ENCODE measurements at regions of chr3 and their contacts with region 1.

Region 1: DNA sequence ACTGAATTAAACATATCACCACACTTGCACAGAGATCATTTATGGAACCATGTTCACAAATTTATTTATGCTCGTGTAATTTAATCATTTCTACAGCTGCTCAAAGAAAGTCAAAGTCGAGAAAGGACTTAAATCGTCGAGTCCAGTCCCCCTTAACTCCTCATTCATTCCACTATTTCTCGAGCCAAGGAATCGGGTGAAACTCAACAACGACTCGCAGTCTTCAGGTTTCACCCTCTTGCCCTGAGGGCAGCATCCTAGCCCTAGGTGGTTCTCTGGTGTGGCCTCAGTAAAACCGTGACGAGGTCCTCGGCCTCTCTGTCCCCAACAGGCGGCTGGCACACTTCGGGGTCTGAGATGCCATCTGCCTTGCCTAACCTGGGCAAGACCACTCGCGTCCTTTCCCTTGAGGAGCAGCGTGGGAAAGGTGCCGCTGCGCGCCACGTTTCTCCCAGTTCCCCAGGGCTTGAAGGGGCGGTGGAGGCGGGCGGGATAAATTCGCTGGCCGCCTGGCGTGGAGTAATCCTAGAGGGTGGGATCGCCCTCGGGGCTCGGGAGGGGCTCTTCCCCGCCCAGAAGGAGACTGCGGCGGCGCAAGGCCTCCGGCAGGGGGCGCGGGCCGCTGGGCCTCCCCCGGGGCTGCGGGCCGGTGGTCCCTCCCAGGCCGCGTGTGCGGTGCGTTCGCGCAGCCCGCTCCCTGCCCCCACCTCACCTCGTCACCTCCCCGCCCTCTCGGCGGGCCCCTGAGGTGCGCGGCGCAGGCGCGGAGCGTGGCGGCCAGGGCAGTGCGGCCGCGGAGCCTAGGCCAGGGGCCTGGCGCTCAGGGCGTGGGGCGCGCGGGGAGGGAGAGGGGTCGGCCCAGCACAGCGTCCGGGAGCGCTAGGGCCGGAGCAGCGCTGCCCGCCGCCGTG is at the start of gene ZNF639:
- DNase-seq: peak; percentile 95
- H3K4me3 ChIP-seq: peak within 1 kb of the TSS; percentile 90
- H3K27ac ChIP-seq: peak within 1 kb of the TSS; percentile 68
- H3K4me1 ChIP-seq: peaks cover 24% of the 10 kb centered on the region
- CTCF ChIP-seq: peak; percentile 84
- total RNA-seq, gene ZNF639: 44.3 and 61.3 TPM in 2 replicates

Region 2: DNA sequence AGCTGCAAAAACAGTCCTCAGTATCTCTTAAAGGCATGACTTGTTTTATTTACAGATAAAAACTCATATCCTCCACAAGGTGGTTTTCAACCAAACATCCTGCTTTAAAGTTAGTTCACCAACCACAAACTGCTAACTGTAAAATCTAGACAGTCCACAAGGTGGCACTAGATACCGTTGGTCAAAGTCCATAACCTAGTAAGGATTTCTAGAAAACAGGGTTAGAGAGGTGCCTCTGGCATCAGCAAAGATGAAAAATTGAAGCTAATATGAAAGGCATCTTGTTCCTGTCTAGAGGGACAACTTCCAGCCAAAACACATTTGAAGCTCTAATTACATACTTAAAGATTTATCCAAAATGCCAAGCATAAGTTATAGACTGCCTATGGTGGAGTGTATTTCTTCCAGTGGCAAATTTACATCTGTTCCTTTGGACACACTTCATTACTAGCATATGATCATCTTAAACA is 307.0 kb before region 1 on chr3:
- CTCF ChIA-PET with region 1: interaction called, 8 read pairs
- POLR2A ChIA-PET with region 1: interaction called, 4 read pairs
- intact Hi-C with region 1: loop called (anchors 1 kb)
- DNase-seq: peak; percentile 86
- H3K4me3 ChIP-seq: no peak overlapping the region
- H3K27ac ChIP-seq: no peak overlapping the region
- H3K4me1 ChIP-seq: peaks cover 41% of the 10 kb centered on the region
- CTCF ChIP-seq: peak; percentile 97

Region 3: GRCh38 chr3:179071550-179072397 is 250.8 kb before region 1 on chr3 and contains the start of gene ZMAT3:
- CTCF ChIA-PET with region 1: no interaction called
- POLR2A ChIA-PET with region 1: interaction called, 15 read pairs
- intact Hi-C with region 1: loop called (anchors 2 kb)
- DNase-seq: peak; percentile 82
- H3K4me3 ChIP-seq: peak within 1 kb of the TSS; percentile 92
- H3K27ac ChIP-seq: peak within 1 kb of the TSS; percentile 73
- H3K4me1 ChIP-seq: peaks cover 40% of the 10 kb centered on the region
- CTCF ChIP-seq: no peak
- total RNA-seq, gene ZMAT3: 3.7 TPM in 2 replicates

Region 4: DNA sequence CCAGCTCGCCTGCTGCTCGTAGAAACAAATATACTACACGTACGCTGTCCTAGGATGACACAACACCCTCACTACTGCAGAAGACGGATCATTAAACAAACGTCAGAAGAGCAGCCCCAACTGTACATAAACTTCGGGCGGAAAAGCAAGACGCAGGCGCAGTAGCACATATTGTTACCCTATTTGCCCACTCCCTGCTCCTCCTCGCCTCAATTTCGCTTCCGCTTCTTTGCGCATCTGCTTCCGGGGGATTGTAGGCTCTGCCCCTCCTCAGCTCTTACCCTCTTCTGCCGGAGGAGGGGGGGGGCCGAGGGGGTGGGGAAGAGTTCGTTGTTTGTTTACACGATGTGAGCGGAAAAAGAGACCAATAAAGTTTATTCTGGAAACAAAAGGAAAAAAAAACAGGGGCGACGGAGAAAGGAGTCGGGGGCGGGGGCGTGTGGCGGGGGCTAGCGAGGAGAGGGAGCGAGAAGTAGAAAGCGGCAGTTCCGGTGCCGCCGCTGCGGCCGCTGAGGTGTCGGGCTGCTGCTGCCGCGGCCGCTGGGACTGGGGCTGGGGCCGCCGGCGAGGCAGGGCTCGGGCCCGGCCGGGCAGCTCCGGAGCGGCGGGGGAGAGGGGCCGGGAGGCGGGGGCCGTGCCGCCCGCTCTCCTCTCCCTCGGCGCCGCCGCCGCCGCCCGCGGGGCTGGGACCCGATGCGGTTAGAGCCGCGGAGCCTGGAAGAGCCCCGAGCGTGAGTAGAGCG is 174.5 kb before region 1 on chr3 and contains the start of gene PIK3CA:
- CTCF ChIA-PET with region 1: no interaction called
- POLR2A ChIA-PET with region 1: interaction called, 5 read pairs
- intact Hi-C with region 1: loop called (anchors 2 kb)
- DNase-seq: peak; percentile 98
- H3K4me3 ChIP-seq: peak within 1 kb of the TSS; percentile 89
- H3K27ac ChIP-seq: peak within 1 kb of the TSS; percentile 77
- H3K4me1 ChIP-seq: peaks cover 22% of the 10 kb centered on the region
- CTCF ChIP-seq: 0 out of 2 replicates have a peak, but pooled peaks have one; percentile 7
- total RNA-seq, gene PIK3CA: 6.9 and 9.0 TPM in 2 replicates

Region 5: GRCh38 chr3:179278932-179279693 is 43.4 kb before region 1 on chr3:
- CTCF ChIA-PET with region 1: no interaction called
- POLR2A ChIA-PET with region 1: no interaction called
- intact Hi-C with region 1: no loop called
- DNase-seq: no peak
- H3K4me3 ChIP-seq: no peak overlapping the region
- H3K27ac ChIP-seq: no peak overlapping the region
- H3K4me1 ChIP-seq: no peaks in the 10 kb centered on the region
- CTCF ChIP-seq: no peak

Region 6: DNA sequence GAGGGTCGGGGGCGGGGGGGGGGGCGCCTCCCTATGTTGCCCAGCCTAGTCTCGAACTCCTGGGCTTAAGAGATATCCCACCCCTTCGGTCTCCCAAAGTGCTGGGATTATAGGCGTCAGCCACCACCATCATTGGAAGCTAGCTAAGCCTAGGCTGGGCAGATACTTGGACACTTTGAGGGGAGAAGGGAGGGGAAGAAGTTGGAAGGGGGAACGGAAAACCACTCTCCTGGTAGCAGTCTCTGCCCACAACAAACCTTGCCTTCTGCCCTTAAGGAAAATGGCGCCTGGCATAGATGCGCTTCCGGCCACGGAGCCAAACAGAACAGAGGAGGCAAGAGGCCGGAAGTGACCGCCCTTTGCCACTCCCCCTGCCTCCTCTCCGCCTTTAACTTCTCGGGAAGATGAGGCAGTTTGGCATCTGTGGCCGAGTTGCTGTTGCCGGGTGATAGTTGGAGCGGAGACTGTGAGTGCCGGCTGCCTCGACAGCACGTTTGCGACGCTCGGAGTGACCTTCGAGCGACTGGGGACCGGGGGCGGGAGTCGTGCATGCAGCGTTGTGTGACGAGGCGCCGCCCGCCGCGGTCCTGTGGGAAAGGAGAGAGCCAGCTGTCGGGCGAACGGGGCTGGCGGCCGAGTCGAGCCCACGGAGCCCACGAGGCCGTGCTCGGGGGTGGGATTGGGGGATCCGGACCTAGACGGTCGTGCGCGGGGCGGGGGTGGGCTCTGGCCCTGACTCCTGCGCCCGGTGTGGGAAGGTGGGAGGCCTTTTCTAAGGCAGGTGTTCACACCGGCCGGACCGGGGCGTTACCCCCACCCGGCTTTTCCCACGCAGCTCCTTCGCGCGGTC is 25.0 kb after region 1 on chr3 and contains the start of gene MFN1:
- CTCF ChIA-PET with region 1: interaction called, 3 read pairs
- POLR2A ChIA-PET with region 1: interaction called, 27 read pairs
- intact Hi-C with region 1: loop called (anchors 1 kb)
- DNase-seq: peak; percentile 93
- H3K4me3 ChIP-seq: peak within 1 kb of the TSS; percentile 76
- H3K27ac ChIP-seq: peak within 1 kb of the TSS; percentile 67
- H3K4me1 ChIP-seq: peaks cover 26% of the 10 kb centered on the region
- CTCF ChIP-seq: no peak
- total RNA-seq, gene MFN1: 23.0 and 31.7 TPM in 2 replicates

Region 7: GRCh38 chr3:179438841-179439240 is 116.3 kb after region 1 on chr3:
- CTCF ChIA-PET with region 1: no interaction called
- POLR2A ChIA-PET with region 1: interaction called, 4 read pairs
- intact Hi-C with region 1: loop called (anchors 2 kb)
- DNase-seq: peak; percentile 94
- H3K4me3 ChIP-seq: peak overlapping the region; percentile 41
- H3K27ac ChIP-seq: peak overlapping the region; percentile 72
- H3K4me1 ChIP-seq: peaks cover 27% of the 10 kb centered on the region
- CTCF ChIP-seq: no peak

Region 8: DNA sequence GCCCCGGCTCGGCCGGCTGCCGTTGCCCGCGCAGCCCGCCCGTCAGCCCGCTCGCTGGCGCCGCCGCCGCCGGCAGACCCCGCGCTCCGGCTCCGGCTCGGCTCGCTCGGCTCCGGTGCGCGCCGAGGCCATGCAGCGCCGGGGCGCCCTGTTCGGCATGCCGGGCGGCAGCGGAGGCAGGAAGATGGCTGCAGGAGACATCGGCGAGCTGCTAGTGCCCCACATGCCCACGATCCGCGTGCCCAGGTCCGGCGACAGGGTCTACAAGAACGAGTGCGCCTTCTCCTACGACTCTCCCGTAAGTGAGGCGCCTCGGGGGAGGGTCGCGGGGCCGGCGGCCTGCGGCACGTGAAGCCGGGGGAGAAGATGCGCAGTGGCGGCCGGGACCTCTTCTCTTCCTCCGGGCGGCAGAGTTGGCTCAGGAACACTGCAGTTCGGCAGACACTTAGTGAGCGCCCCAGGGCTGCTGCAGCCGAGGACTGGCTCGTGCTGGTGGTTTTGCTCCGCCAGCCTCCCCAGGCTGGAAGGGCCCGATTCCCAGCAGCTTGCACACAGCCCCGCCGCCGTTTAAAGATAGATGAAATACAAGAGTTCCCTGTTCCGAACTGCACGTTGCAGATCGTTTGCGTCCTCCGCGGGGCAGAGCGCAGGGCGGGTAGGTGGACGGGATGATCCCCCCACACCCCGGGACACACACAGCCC is 330.7 kb after region 1 on chr3:
- CTCF ChIA-PET with region 1: no interaction called
- POLR2A ChIA-PET with region 1: no interaction called
- intact Hi-C with region 1: loop called (anchors 5 kb)
- DNase-seq: peak; percentile 84
- H3K4me3 ChIP-seq: peak overlapping the region; percentile 96
- H3K27ac ChIP-seq: peak overlapping the region; percentile 81
- H3K4me1 ChIP-seq: peaks cover 32% of the 10 kb centered on the region
- CTCF ChIP-seq: peak; percentile 25; the same call in 1 of the 2 replicates

Measured in OCI-LY7 (cell line).